Activated naive CD4-positive, alpha-beta T cell treated with anti-CD3 and anti-CD28 coated beads for 36 hours (primary cell): ENCODE measurements at regions of chr14 and their contacts with region 1.

Region 1: GRCh38 chr14:51651388-51652167 is at the start of gene FRMD6:
- DNase-seq: peak; percentile 82
- H3K4me3 Mint-ChIP-seq: peak within 1 kb of the TSS; percentile 78
- H3K27ac Mint-ChIP-seq: peak within 1 kb of the TSS; percentile 41
- H3K4me1 Mint-ChIP-seq: peaks cover 21% of the 10 kb centered on the region
- H3K27me3 Mint-ChIP-seq: peaks cover 7% of the 10 kb centered on the region
- total RNA-seq, gene FRMD6: 3.0 to 3.2 TPM

Region 2: DNA sequence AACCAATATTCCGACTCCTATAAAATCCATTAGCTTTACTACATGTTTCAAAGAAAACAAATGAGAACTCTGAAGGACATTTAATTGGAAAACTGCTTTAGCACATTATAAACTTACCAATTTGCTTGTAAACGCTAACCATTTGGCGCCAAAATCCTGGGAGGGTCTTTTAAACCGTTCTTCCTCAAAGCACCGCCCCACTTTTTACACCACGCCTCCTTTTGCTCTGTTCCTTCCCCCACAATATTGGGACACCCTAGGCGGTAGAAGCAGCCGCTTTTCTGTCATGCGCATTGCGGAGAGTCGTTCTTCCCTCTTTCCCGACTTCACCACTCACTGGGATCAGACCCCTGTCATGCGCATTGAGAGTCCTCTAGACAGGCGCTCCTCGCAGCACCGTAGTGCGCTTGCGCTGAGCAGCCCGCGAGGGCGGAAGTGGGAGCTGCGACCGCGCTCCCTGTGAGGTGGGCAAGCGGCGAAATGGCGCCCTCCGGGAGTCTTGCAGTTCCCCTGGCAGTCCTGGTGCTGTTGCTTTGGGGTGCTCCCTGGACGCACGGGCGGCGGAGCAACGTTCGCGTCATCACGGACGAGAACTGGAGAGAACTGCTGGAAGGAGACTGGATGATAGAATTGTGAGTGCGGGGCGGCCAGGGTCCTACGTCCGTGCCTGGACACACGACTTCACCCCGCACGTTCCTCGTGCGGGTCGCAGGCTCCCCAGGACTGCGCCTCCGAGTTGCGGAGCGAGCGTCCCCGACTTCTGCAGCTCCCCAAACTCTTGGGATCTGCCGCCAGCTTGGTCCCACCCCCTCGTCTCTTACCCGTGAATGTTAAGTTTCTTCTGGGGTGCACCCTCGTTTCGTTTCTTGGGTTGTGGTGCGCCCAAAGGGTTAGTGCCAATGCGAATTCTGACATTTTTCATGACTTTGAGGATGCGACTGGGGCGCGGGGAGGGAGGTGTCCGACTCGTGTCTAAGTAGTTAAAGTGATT is 411.5 kb before region 1 on chr14 and contains the start of gene TMX1:
- CTCF ChIA-PET with region 1: interaction called, 4 read pairs
- intact Hi-C with region 1: loop called (anchors 1 kb)
- DNase-seq: peak; percentile 95
- H3K4me3 Mint-ChIP-seq: no peak within 1 kb of the TSS
- H3K27ac Mint-ChIP-seq: no peak within 1 kb of the TSS
- H3K4me1 Mint-ChIP-seq: peaks cover 28% of the 10 kb centered on the region
- H3K27me3 Mint-ChIP-seq: no peaks in the 10 kb centered on the region
- total RNA-seq, gene TMX1: 59.4 to 59.6 TPM

Region 3: DNA sequence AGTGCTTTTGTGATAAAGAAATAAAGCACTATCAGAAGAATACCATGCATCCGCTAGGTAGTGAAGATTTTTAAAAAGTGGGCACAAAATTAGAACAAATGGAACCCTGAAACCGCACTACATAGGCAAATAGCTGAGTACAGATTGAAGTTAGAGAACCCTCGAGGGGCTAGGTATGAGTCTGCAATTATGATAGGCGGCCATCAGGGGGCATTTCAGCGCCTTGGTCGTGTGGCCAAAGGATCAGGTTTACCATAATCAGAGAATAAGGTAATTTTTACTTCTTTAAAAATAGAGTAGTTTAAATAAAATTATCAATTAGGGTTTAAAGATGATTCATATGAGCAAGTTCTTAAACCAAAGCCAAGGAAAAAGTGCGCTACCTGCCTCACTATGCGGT is 281.8 kb before region 1 on chr14:
- CTCF ChIA-PET with region 1: no interaction called
- intact Hi-C with region 1: loop called (anchors 5 kb)
- DNase-seq: peak; percentile 50
- H3K4me3 Mint-ChIP-seq: no peak overlapping the region
- H3K27ac Mint-ChIP-seq: no peak overlapping the region
- H3K4me1 Mint-ChIP-seq: no peaks in the 10 kb centered on the region
- H3K27me3 Mint-ChIP-seq: peaks cover 2% of the 10 kb centered on the region

Region 4: GRCh38 chr14:51479584-51480325 is 171.8 kb before region 1 on chr14:
- CTCF ChIA-PET with region 1: no interaction called
- intact Hi-C with region 1: no loop called
- DNase-seq: no peak
- H3K4me3 Mint-ChIP-seq: no peak overlapping the region
- H3K27ac Mint-ChIP-seq: no peak overlapping the region
- H3K4me1 Mint-ChIP-seq: no peaks in the 10 kb centered on the region
- H3K27me3 Mint-ChIP-seq: peaks cover 4% of the 10 kb centered on the region

Region 5: GRCh38 chr14:51750542-51750941 is 99.0 kb after region 1 on chr14:
- CTCF ChIA-PET with region 1: interaction called, 10 read pairs
- intact Hi-C with region 1: loop called (anchors 1 kb)
- DNase-seq: peak; percentile 42
- H3K4me3 Mint-ChIP-seq: no peak overlapping the region
- H3K27ac Mint-ChIP-seq: no peak overlapping the region
- H3K4me1 Mint-ChIP-seq: no peaks in the 10 kb centered on the region
- H3K27me3 Mint-ChIP-seq: no peaks in the 10 kb centered on the region

Region 6: GRCh38 chr14:51939727-51940390 is 288.3 kb after region 1 on chr14:
- CTCF ChIA-PET with region 1: no interaction called
- intact Hi-C with region 1: no loop called
- DNase-seq: no peak
- H3K4me3 Mint-ChIP-seq: no peak overlapping the region
- H3K27ac Mint-ChIP-seq: no peak overlapping the region
- H3K4me1 Mint-ChIP-seq: peaks cover 40% of the 10 kb centered on the region
- H3K27me3 Mint-ChIP-seq: no peaks in the 10 kb centered on the region

Region 7: DNA sequence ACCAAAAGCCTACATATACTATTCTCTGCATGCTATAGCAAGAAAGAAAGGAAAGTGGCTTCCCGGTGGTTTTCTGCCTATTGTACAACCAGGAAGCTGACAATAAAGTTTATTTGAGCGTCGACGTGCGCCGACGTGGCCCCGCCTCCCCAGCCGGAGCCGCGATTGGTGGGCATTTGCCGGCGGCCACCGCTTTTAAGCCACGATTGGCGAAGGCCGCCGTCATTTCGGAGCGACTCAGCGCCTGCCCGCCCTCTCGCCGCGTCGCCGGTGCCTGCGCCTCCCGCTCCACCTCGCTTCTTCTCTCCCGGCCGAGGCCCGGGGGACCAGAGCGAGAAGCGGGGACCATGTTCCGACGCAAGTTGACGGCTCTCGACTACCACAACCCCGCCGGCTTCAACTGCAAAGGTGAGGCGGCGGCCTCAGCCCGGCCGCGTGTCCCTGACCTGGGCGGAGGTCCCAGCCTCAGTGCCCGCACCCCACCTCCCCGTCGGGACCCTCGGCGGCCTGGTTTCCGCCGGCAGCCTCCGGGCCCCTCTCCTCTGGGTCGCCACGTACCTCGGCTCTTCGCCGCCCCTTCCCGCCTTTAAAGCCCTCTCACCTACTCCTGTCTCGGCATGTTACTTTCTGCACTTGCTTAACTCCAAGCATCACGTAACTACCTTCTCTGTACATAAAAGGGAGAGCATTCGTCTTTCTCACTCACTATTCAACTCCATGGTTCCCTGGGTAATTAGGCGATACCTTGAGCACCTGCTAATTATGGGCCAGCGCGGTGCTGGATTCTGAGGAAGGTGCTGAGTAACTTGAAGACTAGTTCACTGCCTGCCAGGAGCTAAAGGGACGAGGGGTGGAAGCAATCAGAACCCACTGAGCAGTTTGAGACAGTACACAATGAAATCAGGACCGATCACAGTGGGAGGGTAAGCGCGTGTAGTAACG is 338.0 kb after region 1 on chr14 and contains the start of gene RTRAF:
- CTCF ChIA-PET with region 1: no interaction called
- intact Hi-C with region 1: loop called (anchors 1 kb)
- DNase-seq: peak; percentile 93
- H3K4me3 Mint-ChIP-seq: peak within 1 kb of the TSS; percentile 89
- H3K27ac Mint-ChIP-seq: peak within 1 kb of the TSS; percentile 85
- H3K4me1 Mint-ChIP-seq: peaks cover 37% of the 10 kb centered on the region
- H3K27me3 Mint-ChIP-seq: no peaks in the 10 kb centered on the region
- total RNA-seq, gene RTRAF: 255 to 275 TPM

Region 8: DNA sequence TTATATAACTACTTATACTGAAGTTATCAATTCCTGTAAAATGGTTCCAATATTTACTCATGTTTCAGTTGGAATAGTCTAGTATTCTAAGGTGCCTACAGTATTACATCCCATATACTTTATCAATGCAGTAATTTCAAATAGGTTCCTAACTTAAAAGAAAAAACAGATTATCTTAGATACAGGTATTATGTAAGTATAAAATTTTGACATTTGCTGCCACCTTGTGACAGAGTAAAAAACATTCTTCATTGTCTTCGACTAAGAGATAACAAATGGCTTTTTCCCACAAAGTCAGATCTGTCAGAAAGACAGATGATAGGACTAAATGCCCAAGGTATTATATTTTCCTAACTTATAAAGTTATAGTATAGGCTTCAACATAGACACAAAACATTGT is 822.0 kb after region 1 on chr14:
- CTCF ChIA-PET with region 1: no interaction called
- intact Hi-C with region 1: no loop called
- DNase-seq: no peak
- H3K4me3 Mint-ChIP-seq: no peak overlapping the region
- H3K27ac Mint-ChIP-seq: no peak overlapping the region
- H3K4me1 Mint-ChIP-seq: peaks cover 4% of the 10 kb centered on the region
- H3K27me3 Mint-ChIP-seq: no peaks in the 10 kb centered on the region